ENCODE measurements at regions of chr12 and their contacts with region 1.

Region 1: GRCh38 chr12:27243804-27244683 is at the start of gene STK38L:
- DNase-seq: peak; percentile 86
- ATAC-seq: peak; percentile 90
- H3K4me3 ChIP-seq: peak within 1 kb of the TSS; percentile 86
- H3K27ac ChIP-seq: peak within 1 kb of the TSS; percentile 93
- H3K4me1 ChIP-seq: peaks cover 13% of the 10 kb centered on the region; the same call in 1 of the 2 replicates
- H3K27me3 ChIP-seq: no peaks in the 10 kb centered on the region
- CTCF ChIP-seq: peak; percentile 18 to 38 (median 21); a peak in 4 of 6 replicates
- EP300 ChIP-seq: peak in 1 of 2 experiments; percentile 29; a peak in 1 of 4 replicates
- POLR2A ChIP-seq: peak; percentile 98
- RAD21 ChIP-seq: peak; percentile 46
- polyA plus RNA-seq, gene STK38L: 43.0 to 50.2 TPM

Region 2: GRCh38 chr12:26937875-26938700 is 306.0 kb before region 1 on chr12 and contains the starts of genes FGFR1OP2 and INTS13:
- CTCF ChIA-PET with region 1: no interaction called
- POLR2A ChIA-PET with region 1: no interaction called
- RAD21 ChIA-PET with region 1: no interaction called
- SMC1A ChIA-PET with region 1: no interaction called
- in situ Hi-C with region 1: no loop called
- intact Hi-C with region 1: loop called (anchors 10 kb)
- DNase-seq: peak; percentile 95
- ATAC-seq: peak; percentile 87
- H3K4me3 ChIP-seq: peak within 1 kb of the TSS; percentile 99
- H3K27ac ChIP-seq: peak within 1 kb of the TSS; percentile 94
- H3K4me1 ChIP-seq: peaks cover 5% of the 10 kb centered on the region
- H3K27me3 ChIP-seq: no peaks in the 10 kb centered on the region
- CTCF ChIP-seq: no peak
- EP300 ChIP-seq: peak in 1 of 2 experiments; percentile 27; a peak in 1 of 4 replicates
- POLR2A ChIP-seq: peak; percentile 97
- RAD21 ChIP-seq: no peak
- polyA plus RNA-seq, gene FGFR1OP2: 29.0 to 32.2 TPM
- polyA plus RNA-seq, gene INTS13: 43.4 to 65.4 TPM

Region 3: DNA sequence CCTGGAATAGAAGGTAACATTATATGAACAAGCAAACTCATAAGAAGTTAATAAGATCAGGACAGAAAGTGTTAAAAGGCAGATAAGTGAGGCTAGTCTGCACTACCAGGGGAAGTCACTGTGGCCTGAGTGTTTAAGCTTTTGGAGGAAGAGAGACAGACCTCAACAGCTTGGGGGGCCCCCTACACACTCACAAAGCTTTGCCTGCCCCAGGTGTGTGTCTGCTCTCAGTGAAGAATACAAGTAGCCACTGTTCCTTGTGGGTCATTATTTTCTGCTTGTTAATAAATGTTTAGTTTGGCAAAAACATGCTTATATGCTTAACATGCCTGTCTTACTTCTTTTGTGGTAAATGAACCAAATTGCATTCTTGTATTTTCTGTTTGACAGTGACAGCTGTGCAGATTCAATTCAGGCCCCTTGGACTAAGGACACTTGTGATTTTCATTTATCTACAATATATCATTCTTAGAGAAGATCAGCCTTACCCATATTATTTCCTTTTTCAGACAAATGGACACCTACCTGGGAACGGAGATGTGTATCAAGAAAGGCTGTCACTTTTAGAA is 110.9 kb before region 1 on chr12:
- CTCF ChIA-PET with region 1: no interaction called
- POLR2A ChIA-PET with region 1: no interaction called
- RAD21 ChIA-PET with region 1: no interaction called
- SMC1A ChIA-PET with region 1: no interaction called
- in situ Hi-C with region 1: no loop called
- intact Hi-C with region 1: no loop called
- DNase-seq: no peak
- ATAC-seq: peak; percentile 67
- H3K4me3 ChIP-seq: no peak overlapping the region
- H3K27ac ChIP-seq: no peak overlapping the region
- H3K4me1 ChIP-seq: no peaks in the 10 kb centered on the region; the same call in 1 of the 2 replicates
- H3K27me3 ChIP-seq: no peaks in the 10 kb centered on the region
- CTCF ChIP-seq: no peak
- EP300 ChIP-seq: no peak
- POLR2A ChIP-seq: no peak
- RAD21 ChIP-seq: no peak

Region 4: DNA sequence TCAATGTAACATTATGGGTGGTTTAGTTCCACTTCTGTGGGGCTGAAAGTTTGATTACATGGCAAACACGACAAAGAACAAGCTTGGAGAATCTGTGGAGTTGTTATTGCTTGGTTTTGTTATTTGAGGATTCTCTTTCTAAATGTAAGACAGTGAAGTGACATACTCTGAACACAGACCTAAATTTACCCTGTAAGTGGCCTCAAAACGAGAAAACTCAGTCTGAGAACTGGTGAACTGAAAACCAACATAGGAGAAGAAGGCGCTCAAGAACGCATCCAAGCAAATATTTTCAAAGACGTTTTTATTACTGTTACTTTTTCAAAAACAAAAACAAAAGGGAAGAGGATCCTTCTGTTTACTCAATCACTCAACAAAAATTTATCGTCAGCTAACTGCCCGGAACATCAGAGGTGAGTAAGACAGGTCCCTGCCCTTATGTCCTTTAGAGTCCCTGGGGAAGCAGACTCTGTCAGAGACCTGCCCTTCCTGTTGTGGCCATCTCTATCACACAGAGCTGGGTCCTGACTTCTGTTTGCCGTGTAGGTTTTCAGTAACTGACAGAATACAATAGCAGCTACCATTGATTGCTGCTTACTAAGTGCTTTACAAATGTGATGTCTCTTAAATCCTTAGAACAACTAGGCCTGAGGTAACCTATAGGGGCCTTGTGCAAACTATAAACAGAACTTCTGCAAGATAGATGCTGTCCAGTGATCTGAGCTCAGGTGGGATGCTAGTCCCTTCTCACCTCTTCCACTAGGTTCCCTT is 82.4 kb before region 1 on chr12:
- CTCF ChIA-PET with region 1: no interaction called
- POLR2A ChIA-PET with region 1: interaction called, 3 read pairs
- RAD21 ChIA-PET with region 1: interaction called, 11 read pairs
- SMC1A ChIA-PET with region 1: interaction called, 9 read pairs
- in situ Hi-C with region 1: no loop called
- intact Hi-C with region 1: no loop called
- DNase-seq: peak; percentile 62
- ATAC-seq: peak; percentile 93
- H3K4me3 ChIP-seq: peak overlapping the region; percentile 15; the same call in 1 of the 2 replicates
- H3K27ac ChIP-seq: peak overlapping the region; percentile 64
- H3K4me1 ChIP-seq: peaks cover 3% of the 10 kb centered on the region; the same call in 1 of the 2 replicates
- H3K27me3 ChIP-seq: no peaks in the 10 kb centered on the region
- CTCF ChIP-seq: no peak
- EP300 ChIP-seq: no peak
- POLR2A ChIP-seq: no peak
- RAD21 ChIP-seq: no peak

Region 5: GRCh38 chr12:27207615-27208413 is 36.2 kb before region 1 on chr12:
- CTCF ChIA-PET with region 1: interaction called, 8 read pairs
- POLR2A ChIA-PET with region 1: interaction called, 36 read pairs
- RAD21 ChIA-PET with region 1: interaction called, 50 read pairs
- SMC1A ChIA-PET with region 1: interaction called, 40 read pairs
- in situ Hi-C with region 1: no loop called
- intact Hi-C with region 1: loop called (anchors 1 kb)
- DNase-seq: peak; percentile 93
- ATAC-seq: peak; percentile 92
- H3K4me3 ChIP-seq: peak overlapping the region; percentile 44
- H3K27ac ChIP-seq: peak overlapping the region; percentile 97
- H3K4me1 ChIP-seq: peaks cover 35% of the 10 kb centered on the region
- H3K27me3 ChIP-seq: no peaks in the 10 kb centered on the region
- CTCF ChIP-seq: no peak
- EP300 ChIP-seq: peak; percentile 65 to 78; a peak in 3 of 4 replicates
- POLR2A ChIP-seq: no peak
- RAD21 ChIP-seq: peak; percentile 34; the same call in 1 of the 2 replicates

Region 6: GRCh38 chr12:27260746-27261145 is 16.7 kb after region 1 on chr12:
- CTCF ChIA-PET with region 1: interaction called, 7 read pairs
- POLR2A ChIA-PET with region 1: interaction called, 45 read pairs
- RAD21 ChIA-PET with region 1: interaction called, 24 read pairs
- SMC1A ChIA-PET with region 1: interaction called, 67 read pairs
- in situ Hi-C with region 1: no loop called
- intact Hi-C with region 1: no loop called
- DNase-seq: no peak
- ATAC-seq: peak; percentile 18
- H3K4me3 ChIP-seq: peak overlapping the region; percentile 29; the same call in 1 of the 2 replicates
- H3K27ac ChIP-seq: peak overlapping the region; percentile 39
- H3K4me1 ChIP-seq: peaks cover 20% of the 10 kb centered on the region
- H3K27me3 ChIP-seq: no peaks in the 10 kb centered on the region
- CTCF ChIP-seq: no peak
- EP300 ChIP-seq: no peak
- POLR2A ChIP-seq: no peak
- RAD21 ChIP-seq: no peak

Region 7: DNA sequence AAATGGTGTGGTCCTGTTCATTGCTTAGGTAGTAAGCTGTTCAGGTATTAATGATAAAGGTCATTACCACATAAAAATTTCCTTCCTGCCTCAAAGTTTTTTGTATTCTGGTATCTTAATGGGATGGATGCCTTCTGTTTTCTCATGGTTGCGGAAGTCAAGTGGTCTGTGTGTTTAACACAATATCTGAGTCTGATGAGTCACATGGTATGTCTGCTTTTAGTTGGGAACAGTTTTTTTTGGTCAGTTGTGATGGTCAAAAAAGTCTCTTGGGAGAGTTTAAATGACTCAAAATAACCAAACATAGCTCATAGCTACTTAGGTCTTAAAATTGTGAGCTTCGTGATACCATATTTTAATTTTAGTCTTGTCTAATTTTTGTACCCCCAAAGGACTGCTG is 40.7 kb after region 1 on chr12:
- CTCF ChIA-PET with region 1: interaction called, 19 read pairs
- POLR2A ChIA-PET with region 1: interaction called, 94 read pairs
- RAD21 ChIA-PET with region 1: interaction called, 33 read pairs
- SMC1A ChIA-PET with region 1: interaction called, 491 read pairs
- in situ Hi-C with region 1: no loop called
- intact Hi-C with region 1: loop called (anchors 2 kb)
- DNase-seq: peak; percentile 89
- ATAC-seq: peak; percentile 67
- H3K4me3 ChIP-seq: no peak overlapping the region
- H3K27ac ChIP-seq: peak overlapping the region; percentile 70; the same call in 1 of the 2 replicates
- H3K4me1 ChIP-seq: peaks cover 28% of the 10 kb centered on the region
- H3K27me3 ChIP-seq: no peaks in the 10 kb centered on the region
- CTCF ChIP-seq: no peak
- EP300 ChIP-seq: peak; percentile 69 to 77; a peak in 3 of 4 replicates
- POLR2A ChIP-seq: no peak
- RAD21 ChIP-seq: no peak

Measured in GM12878 (cell line).